ENCODE measurements at regions of chr2 and their contacts with region 1.

Region 1: GRCh38 chr2:143259368-143259958 is 130.2 kb downstream of the ARHGAP15 start:
- DNase-seq: peak; percentile 37
- H3K4me3 ChIP-seq: no peak overlapping the region
- H3K27ac ChIP-seq: no peak overlapping the region
- H3K27me3 ChIP-seq: no peaks in the 10 kb centered on the region
- CTCF ChIP-seq: peak; percentile 81

Region 2: DNA sequence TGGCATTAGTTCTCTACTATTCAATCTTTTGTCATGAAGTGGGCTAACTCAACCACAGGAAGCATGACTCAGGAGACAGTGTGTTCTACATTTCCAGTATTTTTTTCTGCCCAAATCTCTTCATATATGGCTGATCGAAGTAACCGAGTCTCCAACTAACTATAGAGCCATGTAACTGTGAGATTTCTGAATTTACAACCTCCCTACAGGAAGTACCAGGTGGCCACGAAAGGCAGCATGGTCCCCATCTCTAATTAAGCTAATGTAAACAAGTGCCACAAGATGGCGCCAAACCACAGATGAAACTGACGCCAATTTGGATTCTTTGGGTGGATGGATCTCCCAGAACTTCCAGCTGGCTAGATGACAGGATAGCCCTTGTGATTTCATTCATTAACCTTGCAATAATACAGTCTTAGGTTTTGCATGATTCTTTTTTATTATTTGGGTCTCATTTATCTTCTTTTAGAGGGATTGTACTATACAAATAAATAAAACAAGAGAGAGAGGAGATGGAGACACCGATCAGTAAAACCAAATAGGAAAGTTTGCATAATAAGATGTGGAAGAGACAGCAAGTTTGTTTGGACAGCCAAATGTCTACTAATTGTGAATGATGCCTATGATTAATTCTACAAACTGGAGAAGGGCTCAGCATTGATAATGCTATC is 148.6 kb before region 1 on chr2:
- CTCF ChIA-PET with region 1: interaction called, 36 read pairs
- POLR2A ChIA-PET with region 1: no interaction called
- DNase-seq: peak; percentile 6
- H3K4me3 ChIP-seq: no peak overlapping the region
- H3K27ac ChIP-seq: no peak overlapping the region
- H3K27me3 ChIP-seq: no peaks in the 10 kb centered on the region
- CTCF ChIP-seq: peak; percentile 54

Region 3: GRCh38 chr2:143162123-143162837 is 97.2 kb before region 1 on chr2:
- CTCF ChIA-PET with region 1: interaction called, 61 read pairs
- POLR2A ChIA-PET with region 1: no interaction called
- DNase-seq: peak; percentile 15
- H3K4me3 ChIP-seq: peak overlapping the region; percentile 39
- H3K27ac ChIP-seq: no peak overlapping the region
- H3K27me3 ChIP-seq: peaks cover 10% of the 10 kb centered on the region
- CTCF ChIP-seq: peak; percentile 79

Region 4: DNA sequence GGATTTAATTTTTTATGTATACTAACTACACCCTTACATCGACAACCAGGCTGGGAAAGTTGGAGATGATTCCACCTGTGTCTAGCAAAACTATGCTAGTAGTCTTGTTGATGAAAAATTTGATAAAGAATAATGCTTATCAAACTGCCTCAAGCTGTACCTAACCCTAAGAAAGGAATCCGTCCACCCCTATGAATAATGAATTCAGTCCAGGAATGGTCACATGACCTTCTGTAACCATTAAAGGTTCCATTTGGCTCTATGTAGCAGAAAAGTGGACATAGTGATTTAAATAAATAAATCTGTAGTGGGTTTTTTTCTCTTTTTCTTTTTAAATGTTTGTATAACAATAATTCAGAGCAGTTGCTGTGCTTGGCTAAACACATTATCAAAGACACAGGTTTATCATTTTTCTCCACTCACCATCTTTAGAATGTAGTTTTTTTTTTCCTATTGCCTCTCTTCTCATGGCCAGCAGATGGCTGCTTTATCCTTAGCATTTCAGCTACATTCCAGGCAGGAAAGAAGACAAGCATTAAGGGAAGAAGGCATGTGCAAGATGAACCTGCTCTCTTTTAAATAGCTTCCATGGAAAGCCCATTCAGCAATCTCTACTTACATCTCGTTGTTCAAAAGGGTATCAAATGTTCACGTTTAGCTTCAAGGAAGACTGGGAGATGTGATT is 87.8 kb before region 1 on chr2:
- CTCF ChIA-PET with region 1: interaction called, 13 read pairs
- POLR2A ChIA-PET with region 1: no interaction called
- DNase-seq: no peak
- H3K4me3 ChIP-seq: no peak overlapping the region
- H3K27ac ChIP-seq: no peak overlapping the region
- H3K27me3 ChIP-seq: no peaks in the 10 kb centered on the region
- CTCF ChIP-seq: peak; percentile 55

Region 5: GRCh38 chr2:143205106-143205764 is 54.2 kb before region 1 on chr2:
- CTCF ChIA-PET with region 1: interaction called, 29 read pairs
- POLR2A ChIA-PET with region 1: no interaction called
- DNase-seq: no peak
- H3K4me3 ChIP-seq: no peak overlapping the region
- H3K27ac ChIP-seq: no peak overlapping the region
- H3K27me3 ChIP-seq: no peaks in the 10 kb centered on the region
- CTCF ChIP-seq: peak; percentile 46

Region 6: GRCh38 chr2:143284087-143284675 is 24.7 kb after region 1 on chr2:
- CTCF ChIA-PET with region 1: interaction called, 18 read pairs
- POLR2A ChIA-PET with region 1: no interaction called
- DNase-seq: no peak
- H3K4me3 ChIP-seq: no peak overlapping the region
- H3K27ac ChIP-seq: no peak overlapping the region
- H3K27me3 ChIP-seq: no peaks in the 10 kb centered on the region
- CTCF ChIP-seq: peak; percentile 81

Measured in AG04450 (cell line).